ENCODE measurements at regions of chr20 and their contacts with region 1.

Region 1: GRCh38 chr20:35883778-35884540 is 70.3 kb downstream of the SCAND1 start:
- DNase-seq: peak; percentile 46 to 96 (median 75)

Region 2: DNA sequence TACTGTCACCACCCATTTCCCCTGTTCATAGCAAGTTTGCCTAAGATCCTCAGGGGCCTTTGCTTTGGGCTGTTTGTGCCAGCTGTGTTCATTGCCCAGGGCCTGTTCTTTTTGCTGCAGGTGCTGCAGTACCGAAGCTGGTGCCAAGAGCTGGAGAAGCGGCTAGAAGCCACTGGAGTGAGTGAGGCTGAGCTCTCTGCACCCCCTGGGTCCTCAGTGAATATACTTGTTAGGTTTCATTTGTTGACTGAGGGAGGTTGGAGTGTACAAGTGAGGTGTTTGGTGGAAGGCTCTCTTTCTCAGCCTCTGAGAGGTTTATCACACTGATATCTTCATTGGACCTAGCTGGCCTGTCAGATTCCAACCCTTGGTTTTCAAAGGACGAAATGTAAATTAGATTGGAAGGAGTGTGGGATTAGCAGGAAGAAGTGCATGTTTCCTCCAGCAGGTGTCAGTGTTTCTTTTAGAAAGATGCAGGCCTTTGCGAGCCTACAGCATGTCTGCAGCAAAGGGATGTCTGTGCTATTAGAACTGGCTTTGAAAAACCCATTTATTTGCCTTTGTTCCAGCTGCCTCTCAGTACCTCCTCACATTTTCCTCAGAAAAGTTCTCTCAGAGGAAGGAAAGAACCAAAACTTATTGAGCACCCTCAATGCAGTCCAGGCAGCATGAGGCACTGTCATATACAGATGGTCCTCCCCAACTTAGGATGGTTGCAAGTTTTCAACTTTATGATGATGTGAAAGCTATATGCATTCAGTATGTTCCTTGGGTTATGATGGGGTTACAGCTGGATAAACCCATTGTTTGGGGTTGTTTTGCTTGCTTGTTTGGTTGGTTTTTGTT is 420.3 kb before region 1 on chr20:
- intact Hi-C with region 1: loop called (anchors 10 kb)
- DNase-seq: peak in 4 of 10 donors; percentile 29 to 58 (median 46)

Region 3: DNA sequence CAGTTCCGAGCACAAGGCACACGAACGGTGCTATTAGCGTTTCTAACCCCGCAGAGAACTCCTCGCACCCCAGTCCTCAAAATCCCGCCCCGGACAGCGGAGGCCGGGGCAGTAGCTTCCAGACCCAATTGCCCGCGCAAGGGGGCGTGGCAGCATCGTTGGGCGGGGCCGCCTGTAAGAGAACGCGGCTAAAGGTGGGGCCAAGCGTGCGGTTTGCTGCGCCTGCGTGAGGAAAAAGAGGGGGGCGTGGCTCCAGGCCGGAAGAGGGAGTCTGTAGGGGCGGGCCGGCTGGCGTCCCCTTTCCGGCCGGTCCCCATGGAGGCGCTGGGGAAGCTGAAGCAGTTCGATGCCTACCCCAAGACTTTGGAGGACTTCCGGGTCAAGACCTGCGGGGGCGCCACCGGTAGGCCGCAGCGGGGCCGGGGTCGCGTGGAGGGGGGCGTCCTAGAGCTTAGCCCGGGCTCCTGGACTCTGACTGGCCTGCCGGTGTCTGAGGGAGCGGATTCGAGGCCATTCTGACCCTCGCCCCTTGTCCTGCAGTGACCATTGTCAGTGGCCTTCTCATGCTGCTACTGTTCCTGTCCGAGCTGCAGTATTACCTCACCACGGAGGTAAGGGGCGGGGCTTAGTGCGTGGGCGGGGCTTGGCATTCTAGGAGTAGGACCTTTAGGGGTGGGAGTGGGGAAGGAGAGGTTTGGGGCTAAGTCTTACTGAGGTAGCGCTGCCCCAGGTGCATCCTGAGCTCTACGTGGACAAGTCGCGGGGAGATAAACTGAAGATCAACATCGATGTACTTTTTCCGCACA is 342.0 kb before region 1 on chr20 and contains the start of gene ERGIC3:
- intact Hi-C with region 1: no loop called
- DNase-seq: peak; percentile 90 to 99 (median 95)

Region 4: DNA sequence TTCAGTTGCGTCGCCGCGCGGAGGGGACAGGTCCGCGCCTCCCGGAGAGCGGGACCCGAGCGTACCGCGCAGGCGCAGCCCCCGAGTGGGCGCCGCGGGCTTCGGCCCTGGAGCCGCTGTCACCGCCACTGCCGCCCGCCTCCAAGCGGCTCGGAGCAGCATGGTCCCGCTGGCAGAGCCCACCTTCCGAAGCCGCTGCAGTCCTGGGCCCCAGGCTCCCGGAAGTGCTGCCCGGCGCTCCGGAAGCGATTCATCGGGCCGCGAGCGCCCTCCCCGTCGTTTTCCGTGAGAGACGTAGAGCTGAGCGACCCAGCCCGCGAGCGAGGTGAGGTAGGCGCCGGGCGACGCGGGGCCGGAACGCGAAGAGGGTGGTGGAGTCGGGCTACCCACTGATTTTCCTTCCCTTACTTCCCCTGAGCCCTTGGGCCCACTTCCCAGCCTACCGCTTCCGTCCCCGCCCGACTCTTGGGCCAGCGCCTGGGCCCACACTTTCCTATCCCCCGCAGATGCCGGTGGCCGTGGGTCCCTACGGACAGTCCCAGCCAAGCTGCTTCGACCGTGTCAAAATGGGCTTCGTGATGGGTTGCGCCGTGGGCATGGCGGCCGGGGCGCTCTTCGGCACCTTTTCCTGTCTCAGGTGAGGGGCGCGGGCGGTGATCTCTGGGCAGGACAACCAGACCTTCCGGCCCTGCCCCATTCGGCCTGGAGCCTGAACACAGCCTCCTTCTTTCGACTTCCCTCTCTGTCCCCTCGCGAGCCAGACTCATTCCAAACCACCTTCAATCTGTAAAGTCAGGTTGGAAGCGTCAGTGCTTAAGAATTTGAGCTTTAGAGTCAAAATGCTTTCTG is 184.6 kb before region 1 on chr20 and contains the starts of genes NFS1 and ROMO1:
- intact Hi-C with region 1: loop called (anchors 10 kb)
- DNase-seq: peak; percentile 81 to 99 (median 89)

Region 5: GRCh38 chr20:35741892-35742740 is 141.8 kb before region 1 on chr20 and contains the start of gene RBM39:
- intact Hi-C with region 1: loop called (anchors 10 kb)
- DNase-seq: peak; percentile 97 to 100 (median 99)

Measured in posterior cingulate gyrus (tissue), 11 donors.